ENCODE measurements at regions of chr6 and their contacts with region 1.

Region 1: DNA sequence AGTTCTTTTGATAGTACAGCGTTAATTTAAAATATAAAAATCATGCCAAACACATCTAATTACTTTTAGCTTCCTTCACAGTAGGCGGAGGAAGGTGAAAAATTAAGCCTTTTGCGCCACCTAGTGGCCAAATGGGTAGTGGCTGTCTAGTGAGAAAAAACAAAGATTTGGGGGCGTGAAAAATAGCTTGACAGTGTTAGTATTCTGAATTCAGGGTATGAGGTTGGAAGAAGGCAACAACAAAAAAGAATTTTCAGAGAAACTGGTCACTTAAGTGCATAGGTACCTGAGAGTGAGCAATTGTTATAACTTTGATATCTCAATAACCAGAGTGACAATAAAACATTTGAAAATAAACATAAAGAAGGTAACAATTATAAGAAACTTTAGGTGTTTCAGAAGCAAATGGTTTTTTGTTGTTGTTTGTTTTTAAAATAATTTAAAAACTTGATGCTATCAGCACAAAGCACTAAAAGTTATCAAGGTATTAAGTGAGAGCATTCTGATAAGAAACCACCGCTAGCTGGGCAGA is 14.3 kb downstream of the PSMB9 start:
- DNase-seq: peak; percentile 73 to 81
- ATAC-seq: peak; percentile 61 to 89 (median 74)
- H3K4me3 ChIP-seq: no peak overlapping the region
- H3K27ac ChIP-seq: no peak overlapping the region
- H3K4me1 ChIP-seq: no peaks in the 10 kb centered on the region
- H3K27me3 ChIP-seq: peaks cover 0 to 3% (median 0%) of the 10 kb centered on the region in 3 donors
- CTCF ChIP-seq: peak; percentile 94

Region 2: DNA sequence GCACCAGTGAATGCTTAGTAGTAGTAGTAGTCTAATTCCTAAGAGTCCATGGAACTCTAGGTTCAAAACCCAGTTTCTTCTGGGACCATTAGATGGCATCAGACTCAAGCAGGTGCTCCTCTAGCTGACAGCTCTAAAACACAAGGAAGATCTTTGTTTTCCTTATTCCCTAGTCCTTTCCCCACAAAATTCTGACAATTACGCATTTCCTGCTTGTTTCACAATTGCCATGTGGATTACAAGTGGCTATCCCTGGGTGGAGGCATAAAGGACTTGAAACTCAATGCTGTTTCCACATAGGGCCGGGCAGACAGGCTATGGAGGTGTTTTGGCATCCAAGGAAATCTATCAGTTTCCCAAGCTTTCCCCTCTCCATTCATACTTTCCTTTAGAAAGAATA is 42.4 kb before region 1 on chr6:
- intact Hi-C with region 1: loop called in 1 of 2 experiments (anchors 5 kb)
- DNase-seq: no peak
- ATAC-seq: peak in 2 of 4 donors; percentile 33 to 76
- H3K4me3 ChIP-seq: no peak overlapping the region
- H3K27ac ChIP-seq: no peak overlapping the region
- H3K4me1 ChIP-seq: no peaks in the 10 kb centered on the region
- H3K27me3 ChIP-seq: no peaks in the 10 kb centered on the region
- CTCF ChIP-seq: peak; percentile 50

Region 3: DNA sequence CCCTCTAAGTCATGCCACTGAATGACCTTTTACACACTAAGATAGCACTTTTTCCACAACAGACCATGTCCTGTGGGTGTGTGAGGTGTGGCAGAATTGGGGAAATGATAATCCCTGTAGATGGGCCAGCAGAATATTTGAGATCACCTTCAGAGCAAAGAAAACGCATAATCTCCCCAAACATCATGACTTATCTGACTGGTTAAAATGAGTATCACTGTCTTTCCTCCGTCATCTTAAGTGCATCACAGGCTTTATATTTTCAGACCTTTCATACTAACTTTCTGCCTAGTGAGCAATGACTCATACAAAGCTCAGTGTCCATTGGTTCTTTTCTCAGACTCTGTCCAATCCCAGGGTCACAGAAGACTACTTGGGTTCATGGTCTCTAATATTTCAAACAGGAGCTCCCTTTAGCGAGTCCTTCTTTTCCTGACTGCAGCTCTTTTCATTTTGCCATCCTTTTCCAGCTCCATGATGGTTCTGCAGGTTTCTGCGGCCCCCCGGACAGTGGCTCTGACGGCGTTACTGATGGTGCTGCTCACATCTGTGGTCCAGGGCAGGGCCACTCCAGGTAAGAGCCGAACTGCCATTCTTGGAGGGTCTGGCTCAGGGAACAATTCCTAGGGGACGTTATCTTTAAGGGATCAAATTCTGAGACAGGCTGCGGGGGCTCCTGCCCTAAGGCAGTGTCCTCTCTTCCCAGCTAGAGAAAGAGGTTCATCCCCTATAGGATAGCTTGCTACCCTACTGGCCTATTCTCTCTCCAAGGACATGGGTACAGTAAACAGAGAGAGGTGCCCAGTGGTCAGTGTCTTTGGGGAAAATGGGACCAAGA is 207.5 kb after region 1 on chr6 and contains the start of gene HLA-DPB1:
- intact Hi-C with region 1: no loop called
- DNase-seq: no peak
- ATAC-seq: peak; percentile 74 to 84 (median 78)
- H3K4me3 ChIP-seq: peak within 1 kb of the TSS; percentile 58
- H3K27ac ChIP-seq: peak within 1 kb of the TSS; percentile 53
- H3K4me1 ChIP-seq: no peaks in the 10 kb centered on the region
- H3K27me3 ChIP-seq: peaks cover 0 to 10% (median 2%) of the 10 kb centered on the region in 3 donors
- CTCF ChIP-seq: no peak
- total RNA-seq, gene HLA-DPB1: 11.9 to 33.2 (median 18.3) TPM